ENCODE measurements at regions of chr2 and their contacts with region 1.

Region 1: GRCh38 chr2:8544786-8545694 is 136.8 kb upstream of the ID2 start:
- DNase-seq: peak; percentile 71 to 88
- ATAC-seq: peak; percentile 67 to 78 (median 69)
- H3K4me3 ChIP-seq: no peak overlapping the region
- H3K4me3 Mint-ChIP-seq: peak overlapping the region; percentile 50
- H3K27ac ChIP-seq: peak overlapping the region; percentile 87
- H3K27ac Mint-ChIP-seq: peak overlapping the region; percentile 99
- H3K4me1 ChIP-seq: peaks cover 74% of the 10 kb centered on the region
- H3K4me1 Mint-ChIP-seq: peaks cover 73 to 82% of the 10 kb centered on the region in 2 donors
- H3K27me3 ChIP-seq: no peaks in the 10 kb centered on the region
- H3K27me3 Mint-ChIP-seq: no peaks in the 10 kb centered on the region
- CTCF ChIP-seq: peak; percentile 45

Region 2: GRCh38 chr2:7467782-7468447 is 1077.1 kb before region 1 on chr2:
- intact Hi-C with region 1: no loop called
- DNase-seq: peak in 1 of 2 donors; percentile 75
- ATAC-seq: peak; percentile 83 to 95 (median 94)
- H3K4me3 ChIP-seq: no peak overlapping the region
- H3K4me3 Mint-ChIP-seq: peak overlapping the region; percentile 18
- H3K27ac ChIP-seq: peak overlapping the region; percentile 75
- H3K27ac Mint-ChIP-seq: peak overlapping the region; percentile 78 to 86
- H3K4me1 ChIP-seq: peaks cover 8% of the 10 kb centered on the region
- H3K4me1 Mint-ChIP-seq: peaks cover 8 to 12% of the 10 kb centered on the region in 2 donors
- H3K27me3 ChIP-seq: no peaks in the 10 kb centered on the region
- H3K27me3 Mint-ChIP-seq: no peaks in the 10 kb centered on the region
- CTCF ChIP-seq: no peak

Region 3: DNA sequence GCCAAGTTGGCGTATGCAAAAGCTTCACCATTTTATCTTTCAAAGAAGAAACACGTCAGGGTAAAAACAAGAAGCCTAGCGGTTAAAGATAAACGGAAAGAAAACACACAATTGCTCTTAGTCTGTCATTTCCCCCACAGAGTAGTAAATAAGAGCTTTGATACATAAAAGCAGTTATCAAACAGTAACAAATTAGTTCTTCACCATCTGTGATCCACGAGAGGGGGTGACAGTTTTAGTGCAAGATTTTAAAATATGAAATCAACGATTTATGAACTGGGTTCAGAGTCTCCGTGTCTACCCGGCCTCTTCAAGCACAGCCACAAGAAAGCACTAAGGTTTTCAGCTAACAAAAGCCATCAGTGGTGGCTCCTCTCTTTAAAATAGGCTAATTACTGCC is 567.1 kb before region 1 on chr2:
- intact Hi-C with region 1: no loop called
- DNase-seq: no peak
- ATAC-seq: no peak
- H3K4me3 ChIP-seq: no peak overlapping the region
- H3K4me3 Mint-ChIP-seq: no peak overlapping the region
- H3K27ac ChIP-seq: no peak overlapping the region
- H3K27ac Mint-ChIP-seq: no peak overlapping the region
- H3K4me1 ChIP-seq: no peaks in the 10 kb centered on the region
- H3K4me1 Mint-ChIP-seq: peaks cover under 1 to 12% of the 10 kb centered on the region in 2 donors
- H3K27me3 ChIP-seq: no peaks in the 10 kb centered on the region
- H3K27me3 Mint-ChIP-seq: no peaks in the 10 kb centered on the region
- CTCF ChIP-seq: no peak

Region 4: DNA sequence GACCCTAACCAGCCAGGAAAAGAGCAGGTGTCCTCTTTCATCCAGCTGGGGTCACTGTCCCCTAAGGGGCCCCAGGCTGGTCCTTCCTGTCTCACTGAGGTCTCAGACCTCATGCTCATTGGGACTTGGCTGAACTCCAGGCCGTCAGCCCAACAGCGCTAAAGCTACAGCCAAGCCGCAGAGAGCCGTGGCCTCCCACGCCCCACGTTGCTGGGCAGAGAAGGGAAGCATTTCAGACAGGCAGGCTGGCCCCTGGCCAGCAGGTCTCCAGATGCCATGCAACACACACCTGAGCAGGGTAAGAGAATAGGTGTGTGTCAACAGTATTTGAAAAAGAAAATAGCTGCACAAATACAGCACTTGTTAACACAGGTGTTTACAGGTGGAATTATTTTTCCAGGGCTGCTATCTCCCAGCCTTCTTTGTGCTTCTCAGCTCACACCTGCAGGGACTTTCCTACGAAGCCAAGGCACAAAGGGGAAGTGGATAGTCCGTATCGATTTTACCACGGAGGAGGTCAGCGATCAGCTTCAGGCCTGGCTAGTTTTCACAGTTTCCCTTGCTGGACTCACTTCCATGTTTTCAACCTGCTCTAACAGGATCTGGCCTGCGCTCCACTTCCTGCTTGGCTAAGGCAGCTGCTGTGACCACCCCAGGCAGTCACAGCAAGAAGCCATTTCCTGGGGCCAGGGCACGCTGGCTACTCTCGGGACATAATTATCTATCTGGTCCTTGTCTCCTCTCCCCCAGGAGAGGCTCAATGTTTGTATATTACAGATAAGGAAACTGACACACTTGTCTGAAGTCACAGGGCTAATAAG is 19.2 kb before region 1 on chr2:
- intact Hi-C with region 1: loop called (anchors 2 kb)
- DNase-seq: peak in 1 of 2 donors; percentile 32
- ATAC-seq: peak; percentile 56 to 77 (median 76)
- H3K4me3 ChIP-seq: no peak overlapping the region
- H3K4me3 Mint-ChIP-seq: peak overlapping the region; percentile 59
- H3K27ac ChIP-seq: peak overlapping the region; percentile 65
- H3K27ac Mint-ChIP-seq: peak overlapping the region; percentile 54 to 91
- H3K4me1 ChIP-seq: peaks cover 67% of the 10 kb centered on the region
- H3K4me1 Mint-ChIP-seq: peaks cover 67 to 76% of the 10 kb centered on the region in 2 donors
- H3K27me3 ChIP-seq: no peaks in the 10 kb centered on the region
- H3K27me3 Mint-ChIP-seq: no peaks in the 10 kb centered on the region
- CTCF ChIP-seq: no peak

Region 5: GRCh38 chr2:8558096-8558495 is 13.1 kb after region 1 on chr2:
- intact Hi-C with region 1: no loop called
- DNase-seq: no peak
- ATAC-seq: no peak
- H3K4me3 ChIP-seq: no peak overlapping the region
- H3K4me3 Mint-ChIP-seq: no peak overlapping the region
- H3K27ac ChIP-seq: no peak overlapping the region
- H3K27ac Mint-ChIP-seq: no peak overlapping the region
- H3K4me1 ChIP-seq: no peaks in the 10 kb centered on the region
- H3K4me1 Mint-ChIP-seq: no peaks in the 10 kb centered on the region
- H3K27me3 ChIP-seq: no peaks in the 10 kb centered on the region
- H3K27me3 Mint-ChIP-seq: no peaks in the 10 kb centered on the region
- CTCF ChIP-seq: no peak

Region 6: DNA sequence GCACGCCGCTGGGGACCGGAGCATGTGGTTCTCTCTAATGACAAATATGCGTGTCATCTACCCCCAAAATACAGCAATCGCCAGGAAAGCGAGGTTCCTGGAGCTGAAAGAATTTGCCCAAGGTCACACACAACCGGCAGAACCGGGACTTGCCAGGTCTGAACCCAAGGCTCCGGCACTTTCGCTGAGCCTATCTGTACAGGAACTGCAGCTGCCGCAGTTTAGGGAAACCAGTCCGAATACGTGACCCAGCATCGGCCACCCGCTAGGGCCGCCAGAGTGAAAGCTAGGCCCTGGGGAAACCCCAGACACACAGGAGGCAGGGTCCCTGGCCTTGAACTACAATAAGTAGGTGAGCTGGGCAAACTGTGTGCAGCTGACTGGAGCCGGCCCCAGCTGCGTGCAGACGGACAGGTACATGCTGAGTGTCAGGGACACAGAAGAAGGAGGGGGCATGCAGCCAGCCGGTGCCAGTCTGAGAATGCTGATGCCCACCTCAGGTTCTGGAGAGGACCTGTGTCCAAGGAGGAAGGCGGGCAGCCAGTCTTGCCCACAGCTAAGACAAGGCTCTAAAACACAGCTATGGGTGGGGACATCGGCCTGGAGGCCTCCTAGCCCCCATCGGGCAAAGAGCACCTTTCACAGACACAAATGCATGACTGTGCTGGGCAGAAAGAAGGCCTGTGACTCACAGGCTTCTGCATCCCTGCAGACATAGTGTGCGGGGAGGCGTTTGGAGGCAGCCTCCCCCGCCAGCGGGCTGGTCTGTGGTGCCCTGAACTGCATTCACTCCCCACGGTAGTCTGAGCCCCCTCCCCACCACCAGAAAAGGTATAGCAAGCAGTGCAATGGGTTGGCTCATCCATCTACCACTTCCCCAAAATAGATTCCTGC is 29.4 kb after region 1 on chr2:
- intact Hi-C with region 1: loop called (anchors 2 kb)
- DNase-seq: no peak
- ATAC-seq: peak; percentile 45 to 57 (median 50)
- H3K4me3 ChIP-seq: no peak overlapping the region
- H3K4me3 Mint-ChIP-seq: peak overlapping the region; percentile 81
- H3K27ac ChIP-seq: no peak overlapping the region
- H3K27ac Mint-ChIP-seq: peak overlapping the region in 1 of 2 donors; percentile 66
- H3K4me1 ChIP-seq: peaks cover 35% of the 10 kb centered on the region
- H3K4me1 Mint-ChIP-seq: peaks cover 34 to 42% of the 10 kb centered on the region in 2 donors
- H3K27me3 ChIP-seq: no peaks in the 10 kb centered on the region
- H3K27me3 Mint-ChIP-seq: peaks cover 0 to 6% of the 10 kb centered on the region in 2 donors
- CTCF ChIP-seq: no peak